ENCODE measurements at regions of chr9 and their contacts with region 1.

Region 1: DNA sequence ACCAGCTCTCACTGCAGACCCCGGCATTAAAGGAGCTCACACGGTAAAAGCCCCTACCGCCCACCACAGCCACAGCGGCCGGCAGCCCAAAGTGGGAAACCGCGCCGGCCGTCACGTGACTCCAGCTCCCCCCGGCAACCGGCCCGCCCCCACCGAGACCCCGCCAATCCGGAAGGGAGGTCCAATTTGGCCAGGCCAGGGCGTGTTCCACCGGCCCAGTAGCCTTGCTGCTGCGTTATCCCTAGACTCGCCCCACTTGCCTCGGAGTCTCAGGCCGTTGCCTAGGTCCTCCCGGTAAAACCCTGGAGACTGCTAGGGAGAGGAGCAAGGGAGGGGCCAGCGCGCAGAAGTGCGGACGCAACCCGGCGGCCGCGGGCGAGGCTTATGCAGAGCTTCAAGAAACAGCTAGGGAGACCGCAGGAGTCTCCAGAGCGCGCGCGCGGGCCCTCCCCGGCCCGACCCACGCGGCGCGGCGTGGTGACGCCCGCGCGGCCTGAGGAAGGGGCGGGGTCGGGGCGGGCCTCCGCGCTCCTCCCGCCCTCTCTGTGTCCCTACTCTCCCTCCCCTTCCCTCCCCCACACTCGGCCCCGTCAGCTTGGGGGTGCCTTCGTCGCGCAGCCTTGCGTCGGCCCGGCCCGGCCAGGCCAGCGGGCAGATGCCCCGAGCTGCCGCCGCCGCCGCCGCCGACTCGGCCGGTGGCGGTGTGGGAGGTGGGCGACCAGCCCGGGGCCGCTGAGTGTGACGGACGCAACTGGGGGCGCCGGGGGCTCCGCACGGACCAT is at the start of gene RIC1:
- DNase-seq: peak; percentile 84 to 93 (median 88)
- ATAC-seq: peak; percentile 82 to 86
- H3K4me3 Mint-ChIP-seq: peak within 1 kb of the TSS; percentile 96 to 100 (median 99)
- H3K27ac Mint-ChIP-seq: peak within 1 kb of the TSS; percentile 96 to 100 (median 98)
- H3K4me1 Mint-ChIP-seq: peaks cover 34 to 80% (median 67%) of the 10 kb centered on the region in 4 donors
- H3K27me3 Mint-ChIP-seq: no peaks in the 10 kb centered on the region
- polyA plus RNA-seq, gene RIC1: 5.4 to 8.3 (median 6.2) TPM

Region 2: DNA sequence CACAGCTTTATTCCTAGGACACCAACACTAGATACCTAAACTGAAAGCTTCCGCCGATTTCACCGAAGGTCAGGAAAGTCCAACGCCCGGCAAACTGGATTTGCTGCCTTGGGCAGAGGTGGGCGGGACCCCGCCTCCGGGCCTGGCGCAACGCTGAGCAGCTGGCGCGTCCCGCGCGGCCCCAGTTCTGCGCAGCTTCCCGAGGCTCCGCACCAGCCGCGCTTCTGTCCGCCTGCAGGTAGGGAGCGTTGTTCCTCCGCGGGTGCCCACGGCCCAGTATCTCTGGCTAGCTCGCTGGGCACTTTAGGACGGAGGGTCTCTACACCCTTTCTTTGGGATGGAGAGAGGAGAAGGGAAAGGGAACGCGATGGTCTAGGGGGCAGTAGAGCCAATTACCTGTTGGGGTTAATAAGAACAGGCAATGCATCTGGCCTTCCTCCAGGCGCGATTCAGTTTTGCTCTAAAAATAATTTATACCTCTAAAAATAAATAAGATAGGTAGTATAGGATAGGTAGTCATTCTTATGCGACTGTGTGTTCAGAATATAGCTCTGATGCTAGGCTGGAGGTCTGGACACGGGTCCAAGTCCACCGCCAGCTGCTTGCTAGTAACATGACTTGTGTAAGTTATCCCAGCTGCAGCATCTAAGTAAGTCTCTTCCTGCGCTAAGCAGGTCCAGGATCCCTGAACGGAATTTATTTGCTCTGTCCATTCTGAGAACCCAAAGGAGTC is 178.2 kb before region 1 on chr9 and contains the start of gene CD274:
- POLR2A ChIA-PET with region 1: interaction called, 29 read pairs
- DNase-seq: peak; percentile 64 to 85 (median 71)
- ATAC-seq: peak; percentile 97
- H3K4me3 Mint-ChIP-seq: peak within 1 kb of the TSS; percentile 93 to 96 (median 94)
- H3K27ac Mint-ChIP-seq: peak within 1 kb of the TSS; percentile 93 to 100 (median 97)
- H3K4me1 Mint-ChIP-seq: peaks cover 17 to 69% (median 32%) of the 10 kb centered on the region in 4 donors
- H3K27me3 Mint-ChIP-seq: no peaks in the 10 kb centered on the region
- polyA plus RNA-seq, gene CD274: 1.1 to 3.9 (median 1.6) TPM

Region 3: GRCh38 chr9:5596173-5596572 is 32.5 kb before region 1 on chr9:
- POLR2A ChIA-PET with region 1: interaction called, 21 read pairs
- DNase-seq: no peak
- ATAC-seq: no peak
- H3K4me3 Mint-ChIP-seq: no peak overlapping the region
- H3K27ac Mint-ChIP-seq: no peak overlapping the region
- H3K4me1 Mint-ChIP-seq: peaks cover 2 to 35% (median 11%) of the 10 kb centered on the region in 4 donors
- H3K27me3 Mint-ChIP-seq: no peaks in the 10 kb centered on the region

Region 4: DNA sequence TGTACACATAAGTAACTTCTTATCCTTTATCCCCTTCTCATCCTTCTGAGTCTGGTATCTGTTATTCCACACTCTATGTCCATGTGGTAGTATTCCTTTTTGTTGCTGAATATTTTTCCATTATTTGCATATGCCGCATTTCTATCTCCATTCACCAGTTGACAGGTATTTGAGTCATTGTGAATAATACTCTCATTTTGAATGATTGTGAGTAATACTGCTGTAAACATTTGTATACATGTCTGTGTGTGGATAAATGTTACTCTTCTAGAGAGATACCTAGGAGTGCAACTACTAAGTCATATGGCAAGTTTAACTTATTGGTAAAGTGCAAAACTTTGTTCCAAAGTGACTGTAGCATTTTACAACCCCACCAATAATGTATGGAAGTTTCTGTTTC is 15.8 kb after region 1 on chr9:
- POLR2A ChIA-PET with region 1: no interaction called
- DNase-seq: no peak
- ATAC-seq: no peak
- H3K4me3 Mint-ChIP-seq: peak overlapping the region in 1 of 10 donors; percentile 43
- H3K27ac Mint-ChIP-seq: peak overlapping the region in 1 of 10 donors; percentile 67
- H3K4me1 Mint-ChIP-seq: peaks cover 19 to 71% (median 46%) of the 10 kb centered on the region in 4 donors
- H3K27me3 Mint-ChIP-seq: no peaks in the 10 kb centered on the region

Region 5: DNA sequence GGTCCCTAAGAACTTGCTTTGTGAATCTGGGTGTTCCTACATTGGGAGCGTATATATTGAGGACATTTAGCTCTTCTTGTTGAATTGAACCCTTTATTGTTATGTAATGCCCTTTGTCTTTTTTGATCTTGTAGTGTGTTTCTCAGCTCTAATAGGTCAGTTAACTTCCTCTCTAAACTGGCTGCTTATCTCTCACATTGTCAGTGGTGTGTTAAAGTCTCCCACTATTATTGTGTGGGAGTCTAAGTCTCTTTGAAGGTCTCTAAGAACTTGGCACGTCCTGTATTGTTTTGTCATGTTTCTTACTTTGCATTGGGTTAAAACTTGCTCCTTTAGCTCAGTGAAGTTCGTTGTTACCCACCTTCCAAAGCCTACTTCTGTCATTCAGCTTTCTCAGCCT is 36.3 kb after region 1 on chr9:
- POLR2A ChIA-PET with region 1: interaction called, 21 read pairs
- DNase-seq: no peak
- ATAC-seq: no peak
- H3K4me3 Mint-ChIP-seq: peak overlapping the region in 6 of 10 donors; percentile 1 to 66 (median 29)
- H3K27ac Mint-ChIP-seq: peak overlapping the region; percentile 22 to 73 (median 54)
- H3K4me1 Mint-ChIP-seq: peaks cover 37 to 78% (median 72%) of the 10 kb centered on the region in 4 donors
- H3K27me3 Mint-ChIP-seq: no peaks in the 10 kb centered on the region

Region 6: DNA sequence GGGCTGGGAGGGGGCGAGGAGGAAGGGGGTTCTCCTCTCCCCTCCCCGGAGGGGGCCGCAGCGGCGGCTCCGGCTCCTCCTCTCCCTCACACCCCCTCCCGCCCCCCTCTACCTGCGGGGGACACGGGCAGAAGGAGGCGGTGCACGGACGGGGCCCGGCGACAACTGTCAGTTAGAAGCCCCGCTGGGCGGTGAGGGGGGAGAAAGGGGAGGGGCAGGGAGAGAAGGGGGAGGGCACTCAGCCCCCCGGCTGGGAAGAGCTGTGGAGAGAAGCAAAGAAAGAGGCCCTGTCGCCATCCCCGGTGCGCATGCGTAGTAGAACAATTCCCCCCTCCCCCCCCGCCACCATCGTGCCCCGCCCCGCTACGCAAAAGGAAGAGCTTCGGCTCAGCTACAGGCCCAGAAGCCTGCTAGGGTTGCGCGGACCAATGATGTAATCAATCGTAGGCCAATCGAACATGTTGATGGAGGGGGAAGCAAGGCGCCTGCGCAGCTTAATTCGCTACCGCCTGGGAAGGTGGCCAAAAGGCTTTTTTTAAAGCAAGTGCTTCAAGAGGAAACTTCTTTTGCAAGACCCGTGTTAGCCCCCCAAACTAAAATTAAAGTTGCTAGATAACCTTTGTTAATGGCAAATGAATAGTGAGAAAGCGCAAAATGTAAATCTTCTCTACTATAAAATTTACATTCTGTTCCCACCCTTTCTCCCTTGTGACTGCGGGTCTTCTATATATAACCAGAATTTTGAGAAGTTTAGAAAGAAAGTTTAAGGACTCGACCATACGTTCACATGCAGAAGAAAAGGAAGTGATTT is 379.7 kb after region 1 on chr9:
- POLR2A ChIA-PET with region 1: interaction called, 12 read pairs
- DNase-seq: peak; percentile 80 to 99 (median 94)
- ATAC-seq: peak; percentile 71 to 72
- H3K4me3 Mint-ChIP-seq: peak overlapping the region; percentile 75 to 95 (median 85)
- H3K27ac Mint-ChIP-seq: peak overlapping the region; percentile 85 to 98 (median 92)
- H3K4me1 Mint-ChIP-seq: peaks cover 19 to 66% (median 51%) of the 10 kb centered on the region in 4 donors
- H3K27me3 Mint-ChIP-seq: no peaks in the 10 kb centered on the region

Measured in naive thymus-derived CD8-positive, alpha-beta T cell (primary cell).